ENCODE measurements at regions of chr12 and their contacts with region 1.

Region 1: GRCh38 chr12:1650260-1650977 is 21.4 kb downstream of the WNT5B start:
- DNase-seq: no peak
- CTCF ChIP-seq: no peak

Region 2: GRCh38 chr12:1939801-1940607 is 289.6 kb after region 1 on chr12:
- in situ Hi-C with region 1: loop called (anchors 10 kb)
- DNase-seq: peak; percentile 85
- CTCF ChIP-seq: peak; percentile 93